Endothelial cell of umbilical vein (primary cell): ENCODE measurements at regions of chr6 and their contacts with region 1.

Region 1: DNA sequence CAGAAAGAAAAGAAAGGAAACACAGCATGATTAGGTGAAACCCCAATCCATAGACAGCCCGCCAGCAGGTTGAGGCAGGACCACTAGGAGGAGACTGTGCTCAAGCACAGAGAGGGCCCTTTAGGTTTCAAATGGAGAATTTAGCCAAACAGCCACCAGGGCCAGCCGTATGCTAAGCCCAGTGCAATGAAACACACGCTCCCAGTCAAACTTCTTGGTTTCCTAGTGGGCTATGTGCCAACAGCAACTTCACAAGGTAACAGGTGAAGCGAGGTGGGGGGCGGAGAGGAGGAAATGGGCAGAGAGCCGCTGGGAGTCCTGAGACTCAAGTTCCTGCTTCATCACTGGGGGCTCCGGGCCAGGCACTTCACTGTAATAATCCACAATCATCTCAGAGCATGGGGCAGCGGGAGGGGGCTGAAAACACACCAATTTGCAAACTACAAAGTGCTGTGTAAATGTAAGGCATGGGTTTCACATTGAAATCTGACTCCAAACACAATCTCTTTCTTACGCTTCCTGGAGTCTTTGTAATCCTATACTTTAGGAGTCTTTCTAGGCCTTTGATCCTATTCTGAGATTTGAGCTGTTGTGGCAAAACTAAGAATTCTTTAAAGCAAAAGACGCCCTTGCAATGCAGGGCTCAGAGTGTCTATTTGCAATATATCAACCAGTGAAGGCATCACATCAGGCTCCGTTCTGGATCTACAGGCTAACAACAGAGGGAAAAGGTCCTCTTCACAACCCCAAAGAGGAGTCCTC is 117.3 kb downstream of the OPRM1 start:
- DNase-seq: peak; percentile 46
- H3K4me3 ChIP-seq: no peak overlapping the region
- H3K27ac ChIP-seq: no peak overlapping the region
- H3K4me1 ChIP-seq: no peaks in the 10 kb centered on the region
- H3K27me3 ChIP-seq: no peaks in the 10 kb centered on the region
- CTCF ChIP-seq: peak; percentile 68 to 81
- POLR2A ChIP-seq: no peak

Region 2: GRCh38 chr6:153437193-153437592 is 719.1 kb before region 1 on chr6:
- CTCF ChIA-PET with region 1: no interaction called
- POLR2A ChIA-PET with region 1: no interaction called
- dilution Hi-C with region 1: no loop called
- intact Hi-C with region 1: no loop called
- DNase-seq: no peak
- H3K4me3 ChIP-seq: no peak overlapping the region
- H3K27ac ChIP-seq: no peak overlapping the region
- H3K4me1 ChIP-seq: no peaks in the 10 kb centered on the region
- H3K27me3 ChIP-seq: no peaks in the 10 kb centered on the region
- CTCF ChIP-seq: no peak
- POLR2A ChIP-seq: no peak

Region 3: DNA sequence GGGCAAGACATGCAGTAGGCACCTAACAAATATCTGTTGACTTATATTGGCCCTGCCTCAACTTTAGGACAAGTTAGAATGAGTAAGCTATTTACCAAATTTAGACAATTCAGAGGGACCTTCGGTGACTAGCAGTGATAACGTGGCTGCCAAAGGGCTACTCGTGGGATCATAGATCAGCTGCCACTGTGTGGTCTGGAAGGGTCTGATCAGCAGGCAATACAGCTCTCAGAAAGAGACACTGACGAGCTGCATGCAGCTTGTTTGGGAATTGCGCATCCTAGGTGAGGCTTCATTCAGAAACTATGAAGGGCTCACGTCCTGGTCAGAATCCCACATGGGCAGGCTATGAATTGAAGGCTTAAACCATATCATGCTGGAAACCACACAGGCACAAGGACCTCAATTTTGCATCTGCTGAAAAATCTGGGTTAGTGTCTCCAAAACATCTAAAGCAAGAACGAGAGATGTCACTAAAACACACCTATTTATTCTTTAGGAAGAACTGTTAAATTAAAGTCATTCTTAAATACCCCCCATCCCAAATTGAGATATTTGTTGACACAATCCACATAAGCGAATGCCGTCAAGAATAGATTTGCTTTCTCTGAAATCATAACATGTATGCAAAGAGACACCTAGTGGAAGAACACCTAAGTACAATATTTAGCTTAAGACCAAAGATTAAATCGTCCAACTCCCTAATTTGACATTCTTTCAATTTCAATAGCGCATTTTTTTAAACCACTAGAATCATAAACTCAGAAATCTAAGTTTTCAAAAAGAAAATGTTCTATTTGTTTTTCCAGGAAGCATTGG is 120.7 kb after region 1 on chr6:
- CTCF ChIA-PET with region 1: interaction called, 53 read pairs
- POLR2A ChIA-PET with region 1: no interaction called
- dilution Hi-C with region 1: no loop called
- intact Hi-C with region 1: loop called (anchors 1 kb)
- DNase-seq: peak; percentile 42
- H3K4me3 ChIP-seq: no peak overlapping the region
- H3K27ac ChIP-seq: no peak overlapping the region
- H3K4me1 ChIP-seq: no peaks in the 10 kb centered on the region
- H3K27me3 ChIP-seq: no peaks in the 10 kb centered on the region
- CTCF ChIP-seq: peak; percentile 21 to 37
- POLR2A ChIP-seq: no peak

Region 4: GRCh38 chr6:154410619-154411072 is 254.3 kb after region 1 on chr6:
- CTCF ChIA-PET with region 1: interaction called, 8 read pairs
- POLR2A ChIA-PET with region 1: no interaction called
- dilution Hi-C with region 1: no loop called
- intact Hi-C with region 1: loop called (anchors 1 kb)
- DNase-seq: peak; percentile 97
- H3K4me3 ChIP-seq: peak overlapping the region in 1 of 3 experiments; percentile 19
- H3K27ac ChIP-seq: peak overlapping the region; percentile 99
- H3K4me1 ChIP-seq: peaks cover 25% of the 10 kb centered on the region
- H3K27me3 ChIP-seq: no peaks in the 10 kb centered on the region
- CTCF ChIP-seq: no peak
- POLR2A ChIP-seq: no peak

Region 5: DNA sequence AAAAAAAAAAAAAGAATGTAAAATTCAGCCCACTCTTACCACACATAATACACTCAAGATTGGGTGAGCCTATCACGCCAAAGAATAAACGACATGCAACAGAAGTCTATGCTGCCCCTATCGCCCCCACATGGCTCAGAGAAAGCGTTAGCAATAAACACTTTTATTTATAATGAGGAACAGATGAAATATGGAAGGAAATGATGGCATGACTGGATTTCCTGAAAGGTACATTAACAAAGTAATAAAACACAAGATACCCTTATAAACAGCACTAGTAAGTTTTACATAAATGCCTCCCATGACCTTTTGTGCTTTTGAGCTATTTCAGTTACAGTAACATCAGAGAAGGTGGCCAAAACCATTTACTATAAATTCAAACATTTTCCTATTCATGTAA is 505.5 kb after region 1 on chr6:
- CTCF ChIA-PET with region 1: interaction called, 8 read pairs
- POLR2A ChIA-PET with region 1: no interaction called
- dilution Hi-C with region 1: no loop called
- intact Hi-C with region 1: loop called (anchors 1 kb)
- DNase-seq: peak; percentile 92
- H3K4me3 ChIP-seq: no peak overlapping the region
- H3K27ac ChIP-seq: peak overlapping the region; percentile 61
- H3K4me1 ChIP-seq: peaks cover 17% of the 10 kb centered on the region
- H3K27me3 ChIP-seq: no peaks in the 10 kb centered on the region
- CTCF ChIP-seq: peak; percentile 31 to 42
- POLR2A ChIP-seq: peak; percentile 29

Region 6: DNA sequence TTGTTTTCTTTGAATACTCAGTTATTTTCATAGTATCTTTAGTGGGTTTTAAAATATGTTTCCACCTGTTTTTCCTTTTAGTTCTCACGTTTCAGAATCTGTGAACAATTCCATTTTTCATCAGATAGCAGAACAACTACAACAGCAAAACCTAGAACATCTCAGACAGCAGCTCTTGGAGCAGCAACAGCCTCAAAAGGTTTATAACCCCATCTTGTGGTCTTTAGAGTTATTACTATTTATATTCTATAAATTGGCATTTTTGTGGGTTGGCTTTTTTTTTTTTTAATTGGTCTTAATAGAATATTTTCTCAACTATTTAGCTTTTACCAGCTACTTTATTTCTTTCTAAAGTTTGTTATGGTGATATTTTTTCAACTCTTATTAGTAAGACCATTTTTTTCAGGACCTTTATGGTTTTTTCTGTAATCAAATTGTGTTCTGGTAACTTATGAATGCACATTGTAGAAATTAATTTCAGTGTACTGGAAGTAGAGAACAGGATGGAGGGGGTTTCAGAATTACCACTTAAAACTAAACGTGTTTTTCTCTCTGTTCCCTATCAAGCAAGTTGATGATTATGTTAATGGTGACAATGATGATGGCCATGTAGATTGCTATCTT is 649.1 kb after region 1 on chr6:
- CTCF ChIA-PET with region 1: interaction called, 4 read pairs
- POLR2A ChIA-PET with region 1: no interaction called
- dilution Hi-C with region 1: no loop called
- intact Hi-C with region 1: loop called (anchors 1 kb)
- DNase-seq: peak; percentile 69
- H3K4me3 ChIP-seq: no peak overlapping the region
- H3K27ac ChIP-seq: no peak overlapping the region
- H3K4me1 ChIP-seq: no peaks in the 10 kb centered on the region
- H3K27me3 ChIP-seq: no peaks in the 10 kb centered on the region
- CTCF ChIP-seq: peak in 1 of 2 donors; percentile 30
- POLR2A ChIP-seq: no peak